ENCODE measurements at regions of chr3 and their contacts with region 1.

Region 1: DNA sequence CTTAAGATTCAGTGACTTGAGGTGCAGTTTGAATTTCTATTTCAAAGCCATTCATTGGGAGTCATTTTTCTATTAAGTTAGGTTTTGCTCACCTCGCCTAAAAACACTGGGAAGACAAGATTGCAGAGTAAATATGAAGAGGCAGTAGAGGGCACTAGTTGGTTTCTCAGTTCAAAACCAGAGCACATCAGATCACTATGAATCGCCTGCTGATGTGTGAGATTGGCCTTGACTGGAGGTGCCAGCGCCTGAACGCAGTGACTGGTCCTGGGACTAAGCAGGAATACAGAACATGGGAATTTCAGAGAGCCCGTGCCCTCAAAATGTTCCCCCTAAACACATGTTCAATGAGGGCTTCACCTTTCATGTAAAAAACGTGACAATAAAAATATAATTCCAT is 229.0 kb downstream of the ITPR1 start:
- DNase-seq: peak in 1 of 2 donors; percentile 56
- ATAC-seq: peak; percentile 69
- H3K4me3 ChIP-seq: no peak overlapping the region
- H3K27ac ChIP-seq: peak overlapping the region in 1 of 2 donors; percentile 64
- H3K4me1 ChIP-seq: peaks cover 0 to 2% of the 10 kb centered on the region in 2 donors
- H3K27me3 ChIP-seq: no peaks in the 10 kb centered on the region

Region 2: DNA sequence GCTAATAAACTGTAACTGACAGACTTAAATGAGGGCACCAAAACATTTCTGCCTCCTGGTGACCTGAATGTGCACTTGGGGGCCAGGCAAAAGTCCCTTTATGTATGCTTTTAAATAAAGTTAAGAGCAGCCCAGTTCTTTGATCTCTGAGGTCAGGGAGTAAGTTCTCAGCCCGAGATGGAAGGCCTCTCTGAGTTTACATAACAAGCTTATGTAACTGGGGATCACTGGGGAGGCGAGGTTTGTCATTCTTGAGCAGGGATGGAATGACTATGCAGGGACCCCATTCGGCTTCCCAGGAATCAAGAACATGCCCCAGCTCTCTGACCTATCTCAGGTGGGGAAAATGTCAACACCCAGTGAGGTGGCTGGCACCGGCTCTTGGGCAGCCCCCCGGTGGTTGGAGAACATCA is 58.4 kb after region 1 on chr3:
- intact Hi-C with region 1: loop called in 1 of 2 experiments (anchors 5 kb)
- DNase-seq: no peak
- ATAC-seq: no peak
- H3K4me3 ChIP-seq: no peak overlapping the region
- H3K27ac ChIP-seq: peak overlapping the region in 1 of 2 donors; percentile 56
- H3K4me1 ChIP-seq: peaks cover 0 to 4% of the 10 kb centered on the region in 2 donors
- H3K27me3 ChIP-seq: no peaks in the 10 kb centered on the region